ENCODE measurements at regions of chr6 and their contacts with region 1.

Region 1: GRCh38 chr6:45504947-45505346 is 127.2 kb upstream of the SUPT3H start:
- DNase-seq: no peak
- ATAC-seq: peak; percentile 26; the same call in 1 of the 2 replicates
- H3K4me3 ChIP-seq: no peak overlapping the region
- H3K27ac ChIP-seq: no peak overlapping the region
- H3K4me1 ChIP-seq: no peaks in the 10 kb centered on the region
- H3K27me3 ChIP-seq: no peaks in the 10 kb centered on the region
- CTCF ChIP-seq: no peak

Region 2: DNA sequence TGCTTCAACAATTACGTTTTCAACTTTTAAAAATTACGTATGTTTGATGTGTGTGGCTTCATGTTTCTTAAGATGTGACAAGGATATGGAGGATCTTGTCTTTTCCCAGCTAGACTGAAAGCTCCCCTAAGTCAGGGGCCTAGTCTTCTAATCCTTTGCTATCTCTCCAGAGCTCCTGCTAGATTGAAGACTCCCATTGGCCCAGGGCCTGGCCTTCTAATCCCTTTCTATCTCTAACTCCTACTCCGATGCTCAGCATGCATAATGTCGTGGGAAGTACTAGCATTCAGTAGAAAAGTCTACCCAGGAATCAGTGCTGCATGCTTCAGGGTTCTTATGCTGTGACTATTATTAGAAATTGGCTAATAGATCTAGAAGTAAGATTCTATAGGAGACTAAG is 17.5 kb after region 1 on chr6:
- CTCF ChIA-PET with region 1: interaction called, 14 read pairs
- POLR2A ChIA-PET with region 1: no interaction called
- in situ Hi-C with region 1: no loop called
- intact Hi-C with region 1: no loop called
- DNase-seq: no peak
- ATAC-seq: no peak
- H3K4me3 ChIP-seq: no peak overlapping the region
- H3K27ac ChIP-seq: no peak overlapping the region
- H3K4me1 ChIP-seq: no peaks in the 10 kb centered on the region
- H3K27me3 ChIP-seq: no peaks in the 10 kb centered on the region
- CTCF ChIP-seq: no peak

Measured in Panc1 (cell line).